ENCODE measurements at regions of chr14 and their contacts with region 1.

Region 1: DNA sequence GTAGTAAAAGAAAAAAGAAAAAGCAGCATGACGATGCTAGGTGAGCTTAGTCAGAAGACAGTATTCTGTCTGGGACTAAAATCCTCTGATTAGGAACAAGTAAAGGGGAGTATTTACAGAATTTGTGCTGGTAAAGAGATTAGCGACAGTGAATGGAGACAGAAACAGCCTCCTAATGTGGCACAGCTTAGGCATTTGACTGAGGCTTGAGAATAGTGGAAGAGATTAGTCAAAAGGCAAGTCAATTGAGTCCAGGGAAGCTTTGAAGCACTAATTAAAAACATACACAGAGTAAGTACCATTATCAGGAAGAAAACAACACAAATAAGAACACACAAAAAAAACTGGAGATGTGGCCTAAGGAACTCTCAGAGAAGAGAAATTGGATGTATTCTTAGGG is 131.9 kb upstream of the CLEC14A start:
- DNase-seq: no peak
- H3K4me3 ChIP-seq: no peak overlapping the region
- H3K27me3 ChIP-seq: no peaks in the 10 kb centered on the region
- CTCF ChIP-seq: no peak

Region 2: DNA sequence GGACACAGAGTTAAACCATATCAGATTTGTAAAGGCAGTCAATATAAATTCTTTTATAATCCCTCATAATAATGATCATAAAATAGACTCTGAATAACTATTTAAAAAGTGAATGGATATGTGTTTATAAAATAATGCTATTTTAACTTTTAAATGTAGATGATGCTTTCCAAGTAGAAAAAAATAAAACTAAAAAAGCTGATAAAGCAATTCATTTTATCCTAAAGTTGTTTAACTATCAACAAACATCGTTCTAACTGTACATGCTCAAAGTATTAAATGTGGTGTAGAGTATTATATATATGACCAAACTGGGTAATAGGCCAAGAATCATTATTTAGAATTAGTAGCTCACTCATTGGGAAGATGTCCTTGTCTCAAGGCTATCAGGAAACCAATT is 116.4 kb after region 1 on chr14:
- CTCF ChIA-PET with region 1: no interaction called
- POLR2A ChIA-PET with region 1: interaction called, 10 read pairs
- DNase-seq: no peak
- H3K4me3 ChIP-seq: no peak overlapping the region
- H3K27me3 ChIP-seq: no peaks in the 10 kb centered on the region
- CTCF ChIP-seq: no peak

Measured in BJ (cell line).